AG04450 (cell line): ENCODE measurements at regions of chr2 and their contacts with region 1.

Region 1: GRCh38 chr2:113138428-113139322 is 11.3 kb downstream of the IL1RN start:
- DNase-seq: peak; percentile 32
- H3K4me3 ChIP-seq: no peak overlapping the region
- H3K27ac ChIP-seq: no peak overlapping the region
- H3K27me3 ChIP-seq: peaks cover 24% of the 10 kb centered on the region
- CTCF ChIP-seq: peak; percentile 77

Region 2: GRCh38 chr2:112474844-112475486 is 663.7 kb before region 1 on chr2:
- CTCF ChIA-PET with region 1: no interaction called
- POLR2A ChIA-PET with region 1: no interaction called
- DNase-seq: no peak
- H3K4me3 ChIP-seq: no peak overlapping the region
- H3K27ac ChIP-seq: no peak overlapping the region
- H3K27me3 ChIP-seq: no peaks in the 10 kb centered on the region
- CTCF ChIP-seq: no peak

Region 3: DNA sequence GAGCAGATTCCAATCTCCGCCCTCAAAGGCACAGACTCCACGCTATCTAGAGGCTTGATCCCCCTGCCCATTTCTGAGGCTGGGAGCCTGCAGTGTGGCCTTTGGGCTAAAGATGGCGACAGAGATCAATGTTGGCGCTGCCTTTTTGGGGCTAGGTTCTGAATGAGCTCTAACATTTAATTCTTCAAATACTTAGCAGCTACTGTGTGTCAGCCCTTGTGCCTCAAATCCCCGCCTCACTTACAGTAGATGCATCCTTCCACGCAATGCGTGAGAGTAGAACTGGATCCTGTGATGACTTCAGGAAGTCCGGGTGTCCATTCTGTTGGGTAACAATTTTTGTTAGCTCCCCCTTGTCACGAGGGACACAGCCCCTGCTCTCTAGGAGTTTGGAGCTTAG is 58.5 kb before region 1 on chr2:
- CTCF ChIA-PET with region 1: interaction called, 12 read pairs
- POLR2A ChIA-PET with region 1: no interaction called
- DNase-seq: peak; percentile 3
- H3K4me3 ChIP-seq: no peak overlapping the region
- H3K27ac ChIP-seq: no peak overlapping the region
- H3K27me3 ChIP-seq: peaks cover 11% of the 10 kb centered on the region
- CTCF ChIP-seq: peak; percentile 61

Region 4: GRCh38 chr2:113148606-113149560 is 10.2 kb after region 1 on chr2:
- CTCF ChIA-PET with region 1: interaction called, 22 read pairs
- POLR2A ChIA-PET with region 1: no interaction called
- DNase-seq: no peak
- H3K4me3 ChIP-seq: no peak overlapping the region
- H3K27ac ChIP-seq: no peak overlapping the region
- H3K27me3 ChIP-seq: peaks cover 3% of the 10 kb centered on the region
- CTCF ChIP-seq: no peak

Region 5: GRCh38 chr2:113203901-113204519 is 65.3 kb after region 1 on chr2:
- CTCF ChIA-PET with region 1: interaction called, 200 read pairs
- POLR2A ChIA-PET with region 1: no interaction called
- DNase-seq: no peak
- H3K4me3 ChIP-seq: no peak overlapping the region
- H3K27ac ChIP-seq: no peak overlapping the region
- H3K27me3 ChIP-seq: no peaks in the 10 kb centered on the region
- CTCF ChIP-seq: peak; percentile 85

Region 6: GRCh38 chr2:113273027-113273551 is 134.4 kb after region 1 on chr2:
- CTCF ChIA-PET with region 1: interaction called, 14 read pairs
- POLR2A ChIA-PET with region 1: no interaction called
- DNase-seq: peak; percentile 20
- H3K4me3 ChIP-seq: no peak overlapping the region
- H3K27ac ChIP-seq: no peak overlapping the region
- H3K27me3 ChIP-seq: peaks cover 70% of the 10 kb centered on the region
- CTCF ChIP-seq: peak; percentile 46; the same call in 1 of the 2 replicates

Region 7: DNA sequence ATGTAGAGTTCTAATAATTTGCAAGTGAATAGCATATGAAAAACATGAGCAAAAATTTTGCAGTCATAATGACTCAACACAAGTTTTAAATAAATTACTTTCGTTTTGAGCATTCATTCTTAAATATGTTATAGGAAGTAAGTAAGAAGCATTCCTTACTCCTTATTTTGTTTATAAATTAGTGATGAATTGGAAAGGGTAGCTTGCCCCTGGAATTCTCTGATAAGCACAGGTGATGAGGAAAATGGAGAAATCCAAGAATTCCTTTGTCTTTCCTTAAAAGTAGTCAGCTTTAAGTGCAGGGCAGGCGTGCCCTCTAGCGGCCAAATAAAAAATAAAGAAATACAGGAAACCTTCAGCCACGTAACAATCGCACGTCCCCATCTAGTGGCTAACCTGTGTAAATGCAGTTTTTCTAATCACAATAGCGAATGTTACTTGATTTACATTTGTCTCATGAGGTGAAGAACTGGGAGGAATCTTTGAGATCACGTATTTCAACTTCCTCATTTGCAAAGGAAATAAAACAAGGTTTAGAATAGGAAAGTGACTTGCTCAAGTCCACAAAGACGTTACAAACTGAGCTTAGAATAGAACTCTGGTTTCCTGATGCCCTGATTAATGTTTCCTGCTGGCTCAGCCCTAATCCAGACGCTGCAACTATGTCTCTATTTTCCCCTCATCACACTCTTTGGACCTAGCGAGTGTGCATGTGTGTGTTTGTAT is 251.6 kb after region 1 on chr2:
- CTCF ChIA-PET with region 1: interaction called, 218 read pairs
- POLR2A ChIA-PET with region 1: no interaction called
- DNase-seq: peak; percentile 68
- H3K4me3 ChIP-seq: peak overlapping the region; percentile 12; the same call in 1 of the 2 replicates
- H3K27ac ChIP-seq: no peak overlapping the region
- H3K27me3 ChIP-seq: peaks cover 6% of the 10 kb centered on the region
- CTCF ChIP-seq: peak; percentile 95